Cardiac septum (tissue), 1 donor: ENCODE measurements at regions of chr9 and their contacts with region 1.

Region 1: GRCh38 chr9:77158772-77159513 is 18.4 kb upstream of the VPS13A start:
- DNase-seq: no peak

Region 2: GRCh38 chr9:76962732-76963131 is 196.2 kb before region 1 on chr9:
- intact Hi-C with region 1: no loop called
- DNase-seq: no peak

Region 3: GRCh38 chr9:76996700-76997099 is 162.2 kb before region 1 on chr9:
- intact Hi-C with region 1: loop called (anchors 10 kb)
- DNase-seq: no peak

Region 4: DNA sequence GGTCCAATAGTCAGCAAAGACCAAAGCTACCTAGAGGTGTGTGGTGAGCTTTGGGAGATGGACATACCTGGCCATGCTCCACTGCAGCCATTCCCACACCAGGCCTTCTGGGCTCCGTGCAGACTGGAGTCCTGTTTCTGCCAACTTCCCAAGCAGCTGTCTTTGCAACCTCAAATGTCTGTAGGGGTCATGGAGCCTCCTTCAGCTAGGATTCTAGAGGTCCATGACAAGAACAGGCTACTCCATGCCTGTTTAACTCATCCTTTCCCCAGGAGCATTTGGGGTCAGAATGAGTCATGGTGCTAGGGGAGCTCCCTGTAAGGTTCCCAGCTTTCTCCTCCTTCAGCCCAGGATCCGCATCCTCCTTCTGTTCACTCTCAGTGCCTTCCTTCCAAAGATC is 35.5 kb after region 1 on chr9:
- intact Hi-C with region 1: no loop called
- DNase-seq: no peak